ENCODE measurements at regions of chr16 and their contacts with region 1.

Region 1: DNA sequence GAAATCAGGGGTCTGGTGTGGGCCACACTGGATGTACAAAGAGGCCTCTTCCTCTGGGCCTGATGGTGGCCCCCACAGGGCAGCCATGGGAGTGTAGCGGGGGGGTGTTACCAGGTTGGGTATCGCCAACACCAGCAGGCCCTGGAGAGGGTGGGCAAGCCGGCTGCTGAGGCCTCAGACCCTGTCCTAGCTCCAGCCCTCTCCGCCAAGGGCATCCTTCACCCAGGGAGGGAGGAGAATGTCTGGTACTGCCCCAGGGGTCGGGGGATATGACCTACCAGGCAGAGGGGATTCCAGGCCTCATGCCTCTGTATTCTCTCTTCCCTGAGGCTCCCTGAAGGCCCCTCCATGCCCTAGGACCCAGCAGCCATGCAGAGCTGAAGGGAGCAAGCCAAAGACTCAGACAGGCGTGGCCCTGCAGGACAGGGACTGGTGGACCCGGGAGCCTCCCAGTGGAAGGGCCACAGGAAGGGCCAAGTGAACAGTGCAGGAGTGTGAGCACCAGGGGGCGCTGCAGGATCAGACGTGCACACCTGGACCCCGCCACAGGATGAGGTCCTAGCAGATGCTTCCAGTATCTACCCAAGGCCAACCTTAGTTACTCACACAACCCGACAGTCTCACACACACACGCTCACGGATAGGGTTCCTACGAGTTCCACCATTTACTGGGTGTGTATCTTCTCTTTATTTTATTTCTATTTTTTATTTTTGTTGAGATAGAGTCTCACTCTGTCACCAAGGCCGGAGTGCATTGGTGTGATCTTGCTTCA is 10.9 kb upstream of the CES4A start:
- DNase-seq: peak; percentile 63 to 97 (median 87)
- ATAC-seq: peak; percentile 97
- H3K4me3 ChIP-seq: no peak overlapping the region
- H3K27ac ChIP-seq: no peak overlapping the region
- H3K4me1 ChIP-seq: peaks cover 0 to 4% of the 10 kb centered on the region in 2 donors
- H3K27me3 ChIP-seq: peaks cover 0 to 8% of the 10 kb centered on the region in 2 donors
- CTCF ChIP-seq: peak; percentile 92 to 98

Region 2: GRCh38 chr16:67159593-67160406 is 182.3 kb after region 1 on chr16 and contains the starts of genes FBXL8 and TRADD:
- intact Hi-C with region 1: loop called in 1 of 2 experiments (anchors 5 kb)
- DNase-seq: peak in 3 of 4 donors; percentile 70 to 96 (median 80)
- ATAC-seq: peak; percentile 80
- H3K4me3 ChIP-seq: peak within 1 kb of the TSS; percentile 96 to 97
- H3K27ac ChIP-seq: peak within 1 kb of the TSS; percentile 81 to 85
- H3K4me1 ChIP-seq: peaks cover 34 to 71% of the 10 kb centered on the region in 2 donors
- H3K27me3 ChIP-seq: peaks cover 8 to 47% of the 10 kb centered on the region in 2 donors
- CTCF ChIP-seq: no peak
- polyA plus RNA-seq, gene FBXL8: 1.8 to 4.1 (median 3.2) TPM
- polyA plus RNA-seq, gene TRADD: 5.8 to 8.6 (median 7.8) TPM

Region 3: GRCh38 chr16:67183627-67184328 is 206.3 kb after region 1 on chr16 and contains the start of gene MATCAP1:
- intact Hi-C with region 1: loop called in 1 of 2 experiments (anchors 10 kb)
- DNase-seq: peak; percentile 95 to 97 (median 96)
- ATAC-seq: peak; percentile 94
- H3K4me3 ChIP-seq: peak within 1 kb of the TSS; percentile 61 to 81
- H3K27ac ChIP-seq: peak within 1 kb of the TSS; percentile 97 to 98
- H3K4me1 ChIP-seq: peaks cover 24 to 57% of the 10 kb centered on the region in 2 donors
- H3K27me3 ChIP-seq: peaks cover 0 to 11% of the 10 kb centered on the region in 2 donors
- CTCF ChIP-seq: peak in 1 of 2 donors; percentile 14
- polyA plus RNA-seq, gene MATCAP1: 43.5 to 66.9 (median 59.5) TPM

Region 4: GRCh38 chr16:67296422-67296821 is 318.9 kb after region 1 on chr16:
- intact Hi-C with region 1: no loop called
- DNase-seq: no peak
- ATAC-seq: peak; percentile 51
- H3K4me3 ChIP-seq: no peak overlapping the region
- H3K27ac ChIP-seq: no peak overlapping the region
- H3K4me1 ChIP-seq: no peaks in the 10 kb centered on the region
- H3K27me3 ChIP-seq: no peaks in the 10 kb centered on the region
- CTCF ChIP-seq: no peak

Region 5: GRCh38 chr16:68356249-68356918 is 1378.9 kb after region 1 on chr16:
- intact Hi-C with region 1: no loop called
- DNase-seq: peak in 1 of 4 donors; percentile 76
- ATAC-seq: no peak
- H3K4me3 ChIP-seq: no peak overlapping the region
- H3K27ac ChIP-seq: no peak overlapping the region
- H3K4me1 ChIP-seq: peaks cover 0 to 17% of the 10 kb centered on the region in 2 donors
- H3K27me3 ChIP-seq: no peaks in the 10 kb centered on the region
- CTCF ChIP-seq: no peak